ENCODE measurements at regions of chr5 and their contacts with region 1.

Region 1: GRCh38 chr5:38250763-38251448 is 7.5 kb upstream of the EGFLAM start:
- DNase-seq: peak in 1 of 3 donors; percentile 3
- H3K4me3 ChIP-seq: no peak overlapping the region
- H3K27ac ChIP-seq: no peak overlapping the region
- H3K4me1 ChIP-seq: no peaks in the 10 kb centered on the region
- H3K27me3 ChIP-seq: peaks cover 3 to 68% (median 17%) of the 10 kb centered on the region in 5 experiments

Region 2: GRCh38 chr5:38265546-38266179 is 14.8 kb after region 1 on chr5:
- CTCF ChIA-PET with region 1: interaction called, 10 read pairs
- POLR2A ChIA-PET with region 1: no interaction called
- DNase-seq: peak; percentile 54 to 77 (median 70)
- H3K4me3 ChIP-seq: no peak overlapping the region
- H3K27ac ChIP-seq: no peak overlapping the region
- H3K4me1 ChIP-seq: no peaks in the 10 kb centered on the region
- H3K27me3 ChIP-seq: peaks cover 13 to 58% (median 23%) of the 10 kb centered on the region in 5 experiments

Region 3: GRCh38 chr5:38528162-38528703 is 277.3 kb after region 1 on chr5:
- CTCF ChIA-PET with region 1: no interaction called
- POLR2A ChIA-PET with region 1: no interaction called
- DNase-seq: peak in 1 of 3 donors; percentile 5
- H3K4me3 ChIP-seq: no peak overlapping the region
- H3K27ac ChIP-seq: no peak overlapping the region
- H3K4me1 ChIP-seq: no peaks in the 10 kb centered on the region
- H3K27me3 ChIP-seq: peaks cover 7 to 61% (median 44%) of the 10 kb centered on the region in 5 experiments